ENCODE measurements at regions of chr15 and their contacts with region 1.

Region 1: DNA sequence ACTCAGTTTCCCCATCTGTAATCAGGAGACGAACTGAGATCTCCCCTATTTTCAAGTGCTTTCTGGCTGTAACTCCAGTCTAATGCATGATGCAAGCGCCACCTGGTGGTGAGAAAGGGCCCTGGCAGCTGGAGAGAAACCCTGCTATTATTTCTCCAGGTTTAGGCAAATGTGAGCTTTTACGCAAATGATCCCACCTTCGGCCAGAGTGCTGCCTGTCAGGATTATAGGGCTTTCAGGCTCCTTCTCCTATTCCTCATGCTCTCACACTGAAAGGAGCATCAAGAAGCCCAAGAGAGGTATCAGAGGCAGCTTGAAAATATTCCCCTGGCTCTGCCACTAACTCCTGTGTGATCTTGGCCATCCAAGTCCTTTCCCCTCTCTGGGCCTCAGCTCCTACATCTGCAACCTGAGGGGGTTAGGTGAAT is 93.9 kb upstream of the RASGRF1 start:
- DNase-seq: peak; percentile 74
- H3K4me3 ChIP-seq: no peak overlapping the region
- H3K27ac ChIP-seq: no peak overlapping the region
- H3K4me1 ChIP-seq: no peaks in the 10 kb centered on the region
- H3K27me3 ChIP-seq: no peaks in the 10 kb centered on the region
- CTCF ChIP-seq: peak; percentile 96

Region 2: DNA sequence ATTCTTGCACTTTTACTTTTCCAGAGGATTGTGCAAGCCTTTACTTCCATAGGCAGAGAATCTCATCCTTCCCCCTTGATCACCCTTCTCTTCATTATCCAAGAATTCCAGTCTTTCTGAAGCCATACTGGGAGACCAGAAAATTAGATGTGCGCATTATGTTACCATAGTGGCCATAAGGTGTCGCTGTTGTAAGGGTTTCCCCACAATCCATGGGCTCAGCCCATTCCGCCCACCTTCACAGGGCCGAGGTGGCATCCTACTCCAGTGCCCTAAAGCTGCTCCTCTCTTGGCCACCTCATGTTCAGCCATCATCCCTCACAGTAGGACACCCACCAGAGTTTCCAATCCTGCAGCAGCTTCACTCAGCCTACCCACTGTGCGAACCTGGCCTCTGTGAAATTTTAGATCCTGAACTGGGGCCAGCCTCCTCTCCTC is 274.7 kb before region 1 on chr15:
- intact Hi-C with region 1: loop called (anchors 5 kb)
- DNase-seq: peak; percentile 48
- H3K4me3 ChIP-seq: no peak overlapping the region
- H3K27ac ChIP-seq: no peak overlapping the region
- H3K4me1 ChIP-seq: no peaks in the 10 kb centered on the region
- H3K27me3 ChIP-seq: no peaks in the 10 kb centered on the region
- CTCF ChIP-seq: peak; percentile 49

Region 3: DNA sequence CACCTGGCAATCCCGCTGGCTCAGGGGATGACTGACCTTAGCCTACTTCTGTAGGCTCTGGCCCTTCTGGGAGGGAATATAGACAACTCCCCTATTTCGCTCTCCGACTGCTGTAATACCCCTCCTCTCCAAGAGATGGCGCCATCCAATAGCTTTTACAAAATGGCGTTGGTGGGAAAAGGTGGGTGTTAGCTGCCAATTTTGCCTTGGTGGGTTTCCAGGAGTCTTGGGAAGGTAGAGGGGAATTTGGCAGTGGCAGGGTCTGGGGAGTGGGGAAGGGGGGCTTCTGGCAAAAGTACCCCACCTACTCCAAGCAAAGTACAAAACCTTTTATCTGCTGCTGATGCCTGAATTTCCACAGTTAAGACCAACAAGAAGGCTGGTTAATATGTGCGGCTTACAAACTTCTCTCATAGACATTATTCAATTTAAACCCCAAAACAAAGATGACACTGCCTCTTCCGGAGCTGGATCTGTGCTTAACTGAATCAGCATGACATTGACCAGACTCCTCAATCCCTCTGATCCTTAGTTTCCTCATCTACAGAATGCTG is 156.0 kb before region 1 on chr15:
- intact Hi-C with region 1: loop called (anchors 2 kb)
- DNase-seq: peak; percentile 27
- H3K4me3 ChIP-seq: no peak overlapping the region
- H3K27ac ChIP-seq: no peak overlapping the region
- H3K4me1 ChIP-seq: no peaks in the 10 kb centered on the region
- H3K27me3 ChIP-seq: no peaks in the 10 kb centered on the region
- CTCF ChIP-seq: peak; percentile 71